Cardiac septum (tissue), 1 donor: ENCODE measurements at regions of chr7 and their contacts with region 1.

Region 1: DNA sequence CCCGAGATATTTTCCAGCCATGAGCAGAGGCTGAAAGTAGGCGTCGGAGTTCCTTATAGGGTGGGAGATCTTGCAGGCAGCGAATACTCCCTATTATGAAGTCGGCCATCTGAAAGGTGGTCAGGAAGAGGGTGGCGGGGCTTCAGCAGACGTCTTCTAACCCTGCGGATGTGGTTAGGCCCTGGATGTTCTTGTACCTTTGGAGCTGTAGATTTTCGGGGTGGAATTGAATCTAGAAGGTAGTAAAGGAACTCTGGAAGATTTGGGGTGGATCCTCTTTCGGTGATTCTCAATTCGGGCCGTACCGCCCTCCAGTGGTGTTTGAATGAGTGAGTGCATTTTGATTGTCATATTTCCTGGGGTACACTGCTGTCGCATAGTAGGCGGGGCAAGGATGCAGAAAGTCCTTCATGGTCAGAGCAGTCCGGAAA is 635 bp downstream of the NUP205 start:
- DNase-seq: no peak

Region 2: GRCh38 chr7:135414850-135415439 is 143.4 kb before region 1 on chr7:
- intact Hi-C with region 1: loop called (anchors 10 kb)
- DNase-seq: no peak

Region 3: GRCh38 chr7:135509903-135510602 is 48.3 kb before region 1 on chr7 and contains the start of gene CNOT4:
- intact Hi-C with region 1: loop called (anchors 2 kb)
- DNase-seq: peak; percentile 98
- total RNA-seq, gene CNOT4: 26.5 TPM

Region 4: GRCh38 chr7:135650831-135651573 is 92.7 kb after region 1 on chr7:
- intact Hi-C with region 1: no loop called
- DNase-seq: no peak